ENCODE measurements at regions of chr1 and their contacts with region 1.

Region 1: DNA sequence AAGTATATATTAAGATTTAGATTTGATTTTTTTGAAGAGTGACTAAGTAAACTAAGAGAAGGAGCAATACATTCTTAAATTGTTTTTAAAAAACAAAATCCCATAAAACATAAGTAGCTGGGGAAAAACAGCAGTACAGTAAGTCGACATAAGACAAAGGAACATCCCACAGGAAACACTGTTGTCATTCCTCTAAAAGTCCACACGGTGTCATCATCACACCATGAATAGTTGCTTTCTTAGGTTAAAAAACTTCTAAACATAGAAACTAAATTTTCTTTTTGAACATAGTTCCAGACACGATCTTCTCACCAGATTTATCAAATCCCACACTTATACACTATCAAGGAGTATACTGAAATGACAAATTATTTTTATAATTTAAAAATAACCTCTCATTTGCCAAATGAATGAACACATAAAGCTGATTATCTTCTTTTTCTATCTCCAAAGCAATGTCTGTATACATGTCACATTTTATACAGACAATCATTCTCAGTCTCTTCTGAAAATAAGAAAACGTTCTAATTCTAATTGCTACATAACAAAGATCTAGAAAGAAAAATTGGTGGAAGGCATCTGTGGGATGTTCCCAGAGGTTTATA is 15.8 kb downstream of the ODF2L start:
- DNase-seq: peak; percentile 44 to 69 (median 62)
- H3K4me3 ChIP-seq: no peak overlapping the region
- H3K4me3 Mint-ChIP-seq: no peak overlapping the region
- H3K27ac ChIP-seq: no peak overlapping the region
- H3K27ac Mint-ChIP-seq: no peak overlapping the region
- H3K4me1 ChIP-seq: peaks cover 0 to 12% of the 10 kb centered on the region in 2 donors
- H3K4me1 Mint-ChIP-seq: peaks cover 5% of the 10 kb centered on the region
- H3K27me3 ChIP-seq: no peaks in the 10 kb centered on the region
- H3K27me3 Mint-ChIP-seq: no peaks in the 10 kb centered on the region
- CTCF ChIP-seq: peak; percentile 90

Region 2: DNA sequence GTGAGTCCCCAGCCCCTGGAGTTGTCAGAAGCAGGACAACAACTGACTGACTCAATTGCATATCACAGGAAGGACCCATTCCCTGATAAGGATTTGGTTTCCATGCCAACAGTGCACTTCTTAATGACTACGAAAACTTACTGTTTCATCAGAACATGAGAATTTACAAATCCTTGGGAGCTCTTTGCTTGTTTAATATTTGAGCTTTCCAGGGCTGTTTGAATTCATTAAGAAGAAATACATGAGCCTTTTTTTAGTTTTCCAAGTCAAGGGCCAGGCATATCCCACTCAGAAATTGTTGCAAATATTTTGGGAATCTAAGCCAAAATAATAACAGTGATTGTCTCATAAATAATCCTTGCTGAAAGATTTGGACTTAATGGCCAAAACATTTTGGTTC is 196.5 kb before region 1 on chr1:
- intact Hi-C with region 1: no loop called
- DNase-seq: no peak
- H3K4me3 ChIP-seq: no peak overlapping the region
- H3K4me3 Mint-ChIP-seq: no peak overlapping the region
- H3K27ac ChIP-seq: no peak overlapping the region
- H3K27ac Mint-ChIP-seq: no peak overlapping the region
- H3K4me1 ChIP-seq: no peaks in the 10 kb centered on the region
- H3K4me1 Mint-ChIP-seq: no peaks in the 10 kb centered on the region
- H3K27me3 ChIP-seq: no peaks in the 10 kb centered on the region
- H3K27me3 Mint-ChIP-seq: peaks cover 0 to 1% (median 0%) of the 10 kb centered on the region in 3 donors
- CTCF ChIP-seq: no peak

Region 3: GRCh38 chr1:86395771-86396497 is 15.6 kb after region 1 on chr1 and contains the start of gene ODF2L:
- intact Hi-C with region 1: no loop called
- DNase-seq: peak; percentile 59 to 70 (median 69)
- H3K4me3 ChIP-seq: peak within 1 kb of the TSS; percentile 69 to 98 (median 98)
- H3K4me3 Mint-ChIP-seq: peak within 1 kb of the TSS; percentile 96 to 100
- H3K27ac ChIP-seq: peak within 1 kb of the TSS; percentile 27 to 80
- H3K27ac Mint-ChIP-seq: peak within 1 kb of the TSS; percentile 78 to 93 (median 89)
- H3K4me1 ChIP-seq: peaks cover 15 to 20% of the 10 kb centered on the region in 2 donors
- H3K4me1 Mint-ChIP-seq: peaks cover 14% of the 10 kb centered on the region
- H3K27me3 ChIP-seq: no peaks in the 10 kb centered on the region
- H3K27me3 Mint-ChIP-seq: peaks cover 0 to 3% (median 2%) of the 10 kb centered on the region in 3 donors
- CTCF ChIP-seq: no peak
- polyA plus RNA-seq, gene ODF2L: 3.2 to 5.7 (median 3.5) TPM

Region 4: DNA sequence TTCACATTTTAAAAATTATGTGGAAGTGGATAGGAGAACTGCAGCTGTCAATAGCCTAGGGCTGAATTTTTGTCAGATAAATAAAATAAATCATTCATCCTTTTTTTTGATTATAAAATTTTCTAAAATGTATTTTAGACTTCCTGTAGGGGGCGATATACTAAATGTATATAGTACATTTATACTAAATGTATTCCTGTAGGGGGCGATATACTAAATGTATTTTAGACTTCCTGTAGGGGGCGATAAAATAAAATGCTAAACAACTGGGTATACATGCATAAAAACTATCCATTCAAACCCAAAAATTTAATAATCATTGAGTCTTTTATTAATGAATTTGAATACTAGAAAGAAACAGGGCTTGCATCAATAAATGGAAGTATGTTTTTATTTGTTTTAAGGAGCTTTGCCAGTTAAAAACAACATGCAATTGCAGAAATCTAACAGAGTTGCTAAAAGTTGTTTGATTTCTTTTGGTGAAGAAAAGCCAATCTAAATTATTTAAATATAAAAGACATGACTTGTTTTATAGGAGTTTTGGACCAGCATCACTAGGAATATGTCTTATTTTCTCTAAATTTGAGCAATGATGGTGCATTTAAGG is 119.7 kb after region 1 on chr1:
- intact Hi-C with region 1: loop called in 1 of 2 experiments (anchors 10 kb)
- DNase-seq: peak; percentile 9 to 80 (median 44)
- H3K4me3 ChIP-seq: no peak overlapping the region
- H3K4me3 Mint-ChIP-seq: no peak overlapping the region
- H3K27ac ChIP-seq: no peak overlapping the region
- H3K27ac Mint-ChIP-seq: no peak overlapping the region
- H3K4me1 ChIP-seq: peaks cover 12 to 14% of the 10 kb centered on the region in 2 donors
- H3K4me1 Mint-ChIP-seq: peaks cover 20% of the 10 kb centered on the region
- H3K27me3 ChIP-seq: no peaks in the 10 kb centered on the region
- H3K27me3 Mint-ChIP-seq: peaks cover 0 to 6% (median 3%) of the 10 kb centered on the region in 3 donors
- CTCF ChIP-seq: peak; percentile 100

Region 5: DNA sequence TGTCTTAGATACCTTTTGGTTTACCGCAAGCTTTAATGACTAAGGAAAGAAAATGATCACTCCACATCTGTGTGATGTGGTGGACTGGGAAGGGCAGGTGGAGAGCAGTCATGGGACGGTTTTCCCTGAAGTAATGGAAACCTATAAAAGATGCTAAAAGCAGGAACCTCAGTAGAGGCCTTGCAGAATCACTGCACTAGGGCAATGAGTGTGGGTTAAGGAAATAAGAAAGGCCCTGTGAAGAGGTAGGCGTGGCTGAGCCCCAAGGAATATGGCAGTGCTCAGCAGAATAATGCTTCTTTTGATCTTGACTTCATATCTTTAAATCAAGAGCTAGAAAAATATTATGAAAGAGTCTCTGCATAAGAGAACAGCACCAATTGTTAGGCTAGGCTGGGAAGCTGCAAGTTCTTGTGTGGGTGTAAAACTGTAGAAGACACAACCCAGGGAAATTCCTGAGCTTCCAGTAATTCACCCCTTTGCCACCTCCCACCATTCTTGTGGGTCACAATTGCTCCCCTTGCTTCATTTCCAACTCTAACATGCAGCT is 216.5 kb after region 1 on chr1:
- intact Hi-C with region 1: no loop called
- DNase-seq: no peak
- H3K4me3 ChIP-seq: no peak overlapping the region
- H3K4me3 Mint-ChIP-seq: no peak overlapping the region
- H3K27ac ChIP-seq: no peak overlapping the region
- H3K27ac Mint-ChIP-seq: no peak overlapping the region
- H3K4me1 ChIP-seq: no peaks in the 10 kb centered on the region
- H3K4me1 Mint-ChIP-seq: no peaks in the 10 kb centered on the region
- H3K27me3 ChIP-seq: no peaks in the 10 kb centered on the region
- H3K27me3 Mint-ChIP-seq: peaks cover 0 to 4% (median 0%) of the 10 kb centered on the region in 3 donors
- CTCF ChIP-seq: no peak

Measured in CD14-positive monocyte (primary cell).